Keratinocyte (primary cell): ENCODE measurements at regions of chr17 and their contacts with region 1.

Region 1: DNA sequence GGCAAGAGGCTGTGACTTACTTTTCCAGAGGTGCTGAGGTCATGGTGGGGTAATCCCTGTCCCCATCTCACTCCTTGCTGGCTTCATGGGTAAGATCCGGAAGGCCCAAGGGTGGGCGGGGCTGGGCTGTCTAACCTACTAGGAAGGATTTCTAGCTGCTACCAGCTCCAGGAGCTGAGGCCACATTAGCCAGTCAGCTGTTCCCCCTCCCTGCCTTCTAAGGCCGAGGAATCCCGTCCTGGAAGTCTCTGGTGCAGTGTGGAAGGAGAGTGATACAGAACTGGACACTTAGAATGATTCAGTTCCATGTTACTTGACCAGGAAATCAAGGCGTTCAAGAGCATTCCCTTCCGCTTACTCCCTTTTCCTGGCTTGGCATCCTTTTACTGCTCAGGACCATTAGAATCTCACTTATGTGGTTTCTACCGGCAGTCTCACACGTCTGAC is 8.9 kb downstream of the GNGT2 start:
- DNase-seq: no peak
- H3K4me3 ChIP-seq: no peak overlapping the region
- H3K27ac ChIP-seq: no peak overlapping the region
- H3K4me1 ChIP-seq: no peaks in the 10 kb centered on the region
- H3K27me3 ChIP-seq: peaks cover 14% of the 10 kb centered on the region
- CTCF ChIP-seq: no peak

Region 2: GRCh38 chr17:49280061-49280460 is 78.6 kb after region 1 on chr17:
- dilution Hi-C with region 1: loop called (anchors 10 kb)
- DNase-seq: no peak
- H3K4me3 ChIP-seq: no peak overlapping the region
- H3K27ac ChIP-seq: no peak overlapping the region
- H3K4me1 ChIP-seq: no peaks in the 10 kb centered on the region
- H3K27me3 ChIP-seq: no peaks in the 10 kb centered on the region
- CTCF ChIP-seq: no peak